A673 (cell line): ENCODE measurements at regions of chr6 and their contacts with region 1.

Region 1: GRCh38 chr6:128696663-128697391 is 176.4 kb upstream of the PTPRK start:
- DNase-seq: peak; percentile 49
- H3K4me3 ChIP-seq: no peak overlapping the region
- H3K27ac ChIP-seq: no peak overlapping the region
- H3K4me1 ChIP-seq: no peaks in the 10 kb centered on the region
- H3K27me3 ChIP-seq: no peaks in the 10 kb centered on the region
- CTCF ChIP-seq: no peak

Region 2: DNA sequence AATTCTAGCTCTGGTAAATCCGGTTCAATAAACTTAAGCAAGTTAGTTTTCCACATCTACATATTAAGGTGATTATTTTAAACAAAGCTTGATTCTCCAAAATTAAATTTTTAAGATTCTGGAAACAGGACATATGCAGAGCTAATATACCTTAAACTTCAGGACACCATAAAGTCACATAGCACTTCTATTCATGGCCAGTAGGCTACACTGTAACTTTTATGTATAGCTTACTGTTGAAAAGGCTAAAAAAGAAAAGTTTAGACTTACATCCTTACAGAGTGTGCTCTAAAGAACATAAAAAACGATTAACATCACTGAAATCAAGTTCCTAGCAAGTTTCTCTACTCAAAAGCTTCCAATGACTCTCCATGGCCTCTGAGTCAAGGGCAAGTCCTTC is 401.2 kb before region 1 on chr6:
- CTCF ChIA-PET with region 1: no interaction called
- POLR2A ChIA-PET with region 1: no interaction called
- intact Hi-C with region 1: no loop called
- DNase-seq: no peak
- H3K4me3 ChIP-seq: no peak overlapping the region
- H3K27ac ChIP-seq: no peak overlapping the region
- H3K4me1 ChIP-seq: no peaks in the 10 kb centered on the region
- H3K27me3 ChIP-seq: no peaks in the 10 kb centered on the region
- CTCF ChIP-seq: peak; percentile 35; the same call in 1 of the 2 replicates

Region 3: DNA sequence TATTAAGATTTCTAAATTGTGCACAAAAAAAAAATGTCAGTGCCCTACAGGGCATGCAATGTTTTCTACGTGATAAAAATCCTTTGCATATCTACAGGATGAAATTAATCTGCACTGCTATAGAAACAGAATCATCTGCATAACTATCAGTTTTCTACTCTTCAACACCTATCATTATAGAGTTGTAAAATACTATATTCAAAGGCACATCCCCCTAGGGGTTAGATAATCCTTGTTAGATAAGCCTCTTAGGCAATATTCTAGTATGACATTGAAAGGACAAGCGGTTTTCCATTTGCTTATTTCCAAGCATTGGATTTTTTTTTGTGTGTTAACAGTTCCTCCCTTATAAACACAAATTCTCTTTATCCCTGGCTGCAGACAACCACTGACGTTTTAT is 87.4 kb after region 1 on chr6:
- CTCF ChIA-PET with region 1: no interaction called
- POLR2A ChIA-PET with region 1: no interaction called
- intact Hi-C with region 1: no loop called
- DNase-seq: peak; percentile 57
- H3K4me3 ChIP-seq: no peak overlapping the region
- H3K27ac ChIP-seq: no peak overlapping the region
- H3K4me1 ChIP-seq: no peaks in the 10 kb centered on the region
- H3K27me3 ChIP-seq: no peaks in the 10 kb centered on the region
- CTCF ChIP-seq: no peak

Region 4: DNA sequence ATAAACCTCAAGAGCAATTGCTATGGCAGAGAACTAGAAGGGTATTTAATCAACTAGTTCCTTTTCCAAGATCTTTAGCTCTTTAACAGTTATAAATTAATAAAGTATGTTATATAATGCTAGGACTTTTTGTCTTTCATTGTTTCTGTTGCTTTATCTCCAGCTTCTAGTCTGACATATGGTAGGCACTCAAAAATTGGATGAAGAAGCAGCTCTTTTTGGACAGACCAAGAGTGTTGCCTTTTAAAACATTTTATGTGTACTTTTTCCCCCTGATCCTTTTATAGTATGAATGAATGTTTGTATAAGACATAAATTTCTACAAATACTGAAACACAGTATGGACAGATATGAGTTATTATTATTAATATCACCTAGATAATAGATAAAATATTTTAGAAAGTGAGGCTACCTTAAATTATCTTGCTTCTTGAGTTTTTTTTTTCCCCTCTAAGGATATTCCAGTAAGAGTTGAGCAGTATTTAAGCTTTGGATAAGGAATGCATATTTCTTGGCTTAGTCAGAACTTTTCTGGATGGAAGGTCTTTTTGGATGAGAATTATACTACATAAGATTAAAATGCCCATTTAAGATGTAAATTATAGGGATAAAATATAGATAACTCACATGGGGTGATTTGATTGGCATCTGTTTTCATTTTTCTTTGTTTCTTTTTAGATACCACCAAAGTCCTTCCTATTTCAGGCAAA is 202.7 kb after region 1 on chr6:
- CTCF ChIA-PET with region 1: no interaction called
- POLR2A ChIA-PET with region 1: no interaction called
- intact Hi-C with region 1: no loop called
- DNase-seq: no peak
- H3K4me3 ChIP-seq: no peak overlapping the region
- H3K27ac ChIP-seq: no peak overlapping the region
- H3K4me1 ChIP-seq: no peaks in the 10 kb centered on the region
- H3K27me3 ChIP-seq: no peaks in the 10 kb centered on the region
- CTCF ChIP-seq: no peak

Region 5: DNA sequence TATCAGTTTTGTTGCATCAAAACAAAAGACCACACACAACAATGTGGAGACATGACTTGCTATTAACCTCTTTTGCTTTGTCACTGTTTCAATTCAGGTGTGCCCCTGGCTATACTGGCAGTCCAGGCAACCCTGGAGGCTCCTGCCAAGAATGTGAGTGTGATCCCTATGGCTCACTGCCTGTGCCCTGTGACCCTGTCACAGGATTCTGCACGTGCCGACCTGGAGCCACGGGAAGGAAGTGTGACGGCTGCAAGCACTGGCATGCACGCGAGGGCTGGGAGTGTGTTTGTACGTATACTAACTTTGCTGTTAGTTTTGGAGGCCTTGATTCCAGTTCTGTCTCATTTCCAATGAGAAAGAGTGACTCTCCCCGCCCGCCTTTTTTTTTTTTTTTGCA is 656.2 kb after region 1 on chr6:
- CTCF ChIA-PET with region 1: no interaction called
- POLR2A ChIA-PET with region 1: interaction called, 13 read pairs
- intact Hi-C with region 1: no loop called
- DNase-seq: no peak
- H3K4me3 ChIP-seq: no peak overlapping the region
- H3K27ac ChIP-seq: no peak overlapping the region
- H3K4me1 ChIP-seq: no peaks in the 10 kb centered on the region
- H3K27me3 ChIP-seq: no peaks in the 10 kb centered on the region
- CTCF ChIP-seq: no peak